ENCODE measurements at regions of chr1 and their contacts with region 1.

Region 1: GRCh38 chr1:66446261-66447001 is 87.5 kb upstream of the SGIP1 start:
- DNase-seq: peak in 7 of 9 donors; percentile 45 to 82 (median 74)
- ATAC-seq: peak; percentile 85
- H3K4me3 ChIP-seq: no peak overlapping the region
- H3K4me3 Mint-ChIP-seq: peak overlapping the region in 9 of 10 donors; percentile 59 to 85 (median 74)
- H3K27ac ChIP-seq: peak overlapping the region; percentile 72
- H3K27ac Mint-ChIP-seq: peak overlapping the region; percentile 87 to 98 (median 94)
- H3K4me1 ChIP-seq: peaks cover 12 to 18% of the 10 kb centered on the region in 2 donors
- H3K4me1 Mint-ChIP-seq: peaks cover 18 to 32% (median 25%) of the 10 kb centered on the region in 7 donors
- H3K27me3 ChIP-seq: no peaks in the 10 kb centered on the region
- H3K27me3 Mint-ChIP-seq: peaks cover 0 to 20% (median 0%) of the 10 kb centered on the region in 5 donors

Region 2: DNA sequence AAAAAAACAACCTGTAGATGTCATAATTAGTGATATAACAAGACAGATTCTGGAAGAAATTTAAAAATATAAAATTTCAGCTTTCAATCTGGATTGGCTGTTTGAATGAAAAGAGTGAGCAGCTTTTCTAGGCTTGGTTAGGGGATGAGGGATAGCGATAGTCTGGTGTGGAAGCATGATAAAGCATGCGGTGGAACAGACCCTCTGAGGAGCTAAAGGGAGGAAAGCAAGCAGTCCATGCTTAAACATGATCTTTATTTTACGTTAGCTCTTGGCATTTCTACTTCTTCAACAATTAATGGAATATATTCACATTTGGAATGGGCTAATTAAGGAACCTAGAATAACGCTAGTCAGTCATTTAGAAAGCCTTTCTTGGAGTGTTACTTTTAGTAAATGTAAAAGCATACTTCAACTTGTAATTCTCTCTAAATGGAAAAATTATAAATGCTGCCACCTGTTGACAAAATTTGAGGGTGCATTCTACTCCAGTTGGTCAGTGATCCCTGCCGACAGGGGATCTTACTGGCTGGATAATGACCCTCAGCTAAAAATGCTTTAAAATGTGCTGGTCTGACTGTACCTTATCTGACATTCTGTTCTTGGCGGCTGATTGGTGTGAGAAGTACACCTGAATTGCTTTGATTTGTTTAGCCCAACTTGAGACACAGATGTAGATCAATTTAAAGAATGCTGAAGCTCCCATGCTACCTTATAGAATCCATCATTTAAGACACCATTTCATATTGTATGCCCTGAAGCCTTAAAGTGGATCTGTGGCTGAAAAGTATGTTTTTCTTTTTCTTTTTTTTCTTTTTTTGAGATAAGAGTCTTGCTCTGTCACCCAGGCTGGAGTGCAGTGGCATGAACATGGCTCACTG is 1237.2 kb before region 1 on chr1:
- CTCF ChIA-PET with region 1: no interaction called
- POLR2A ChIA-PET with region 1: no interaction called
- intact Hi-C with region 1: loop called in 1 of 2 experiments (anchors 10 kb)
- DNase-seq: peak in 3 of 9 donors; percentile 4 to 15 (median 10)
- ATAC-seq: no peak
- H3K4me3 ChIP-seq: no peak overlapping the region
- H3K4me3 Mint-ChIP-seq: no peak overlapping the region
- H3K27ac ChIP-seq: no peak overlapping the region
- H3K27ac Mint-ChIP-seq: no peak overlapping the region
- H3K4me1 ChIP-seq: no peaks in the 10 kb centered on the region
- H3K4me1 Mint-ChIP-seq: peaks cover 0 to 59% (median 0%) of the 10 kb centered on the region in 7 donors
- H3K27me3 ChIP-seq: no peaks in the 10 kb centered on the region
- H3K27me3 Mint-ChIP-seq: peaks cover 0 to 12% (median 0%) of the 10 kb centered on the region in 5 donors

Region 3: GRCh38 chr1:65687428-65688214 is 758.8 kb before region 1 on chr1:
- CTCF ChIA-PET with region 1: no interaction called
- POLR2A ChIA-PET with region 1: no interaction called
- intact Hi-C with region 1: loop called in 1 of 2 experiments (anchors 5 kb)
- DNase-seq: peak; percentile 47 to 81 (median 71)
- ATAC-seq: peak; percentile 92
- H3K4me3 ChIP-seq: no peak overlapping the region
- H3K4me3 Mint-ChIP-seq: peak overlapping the region in 1 of 10 donors; percentile 17
- H3K27ac ChIP-seq: no peak overlapping the region
- H3K27ac Mint-ChIP-seq: peak overlapping the region in 1 of 9 donors; percentile 51
- H3K4me1 ChIP-seq: peaks cover 0 to 5% of the 10 kb centered on the region in 2 donors
- H3K4me1 Mint-ChIP-seq: peaks cover 0 to 14% (median 0%) of the 10 kb centered on the region in 7 donors
- H3K27me3 ChIP-seq: no peaks in the 10 kb centered on the region
- H3K27me3 Mint-ChIP-seq: peaks cover 11 to 29% (median 16%) of the 10 kb centered on the region in 5 donors

Region 4: GRCh38 chr1:66242646-66243547 is 203.5 kb before region 1 on chr1:
- CTCF ChIA-PET with region 1: interaction called, 274 read pairs
- POLR2A ChIA-PET with region 1: interaction called, 4 read pairs
- intact Hi-C with region 1: loop called (anchors 1 kb)
- DNase-seq: peak; percentile 43 to 75 (median 65)
- ATAC-seq: peak; percentile 93
- H3K4me3 ChIP-seq: no peak overlapping the region
- H3K4me3 Mint-ChIP-seq: no peak overlapping the region
- H3K27ac ChIP-seq: no peak overlapping the region
- H3K27ac Mint-ChIP-seq: no peak overlapping the region
- H3K4me1 ChIP-seq: peaks cover 17 to 36% of the 10 kb centered on the region in 2 donors
- H3K4me1 Mint-ChIP-seq: peaks cover 7 to 31% (median 15%) of the 10 kb centered on the region in 7 donors
- H3K27me3 ChIP-seq: no peaks in the 10 kb centered on the region
- H3K27me3 Mint-ChIP-seq: peaks cover 6 to 7% (median 6%) of the 10 kb centered on the region in 5 donors

Region 5: DNA sequence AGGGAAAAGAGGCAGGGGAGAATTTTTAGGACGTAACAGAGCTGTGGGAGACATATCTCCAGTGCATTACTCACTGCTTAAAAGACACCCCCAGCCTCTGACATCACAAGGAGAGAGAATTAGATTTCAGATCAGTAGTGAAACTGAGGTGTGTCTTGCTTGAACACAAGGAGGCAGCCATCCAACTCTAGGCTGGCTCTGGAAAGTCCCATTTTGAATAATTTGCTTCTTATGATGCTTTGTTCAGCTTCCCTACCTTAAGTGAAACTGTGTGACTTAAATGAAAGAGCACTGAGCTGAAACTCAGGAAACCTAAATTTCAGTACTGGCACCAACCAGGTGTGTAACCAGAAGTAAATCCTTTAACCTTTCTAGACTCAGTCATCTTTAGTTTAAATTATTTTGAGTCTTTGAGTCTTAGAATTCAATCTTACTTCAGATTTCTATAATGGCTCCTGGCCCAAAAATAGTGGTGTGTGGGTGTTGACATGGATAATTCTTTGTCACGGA is 164.0 kb before region 1 on chr1:
- CTCF ChIA-PET with region 1: interaction called, 53 read pairs
- POLR2A ChIA-PET with region 1: interaction called, 12 read pairs
- intact Hi-C with region 1: loop called (anchors 1 kb)
- DNase-seq: peak in 8 of 9 donors; percentile 49 to 88 (median 68)
- ATAC-seq: peak; percentile 95
- H3K4me3 ChIP-seq: no peak overlapping the region
- H3K4me3 Mint-ChIP-seq: peak overlapping the region in 4 of 10 donors; percentile 12 to 57 (median 25)
- H3K27ac ChIP-seq: peak overlapping the region; percentile 64
- H3K27ac Mint-ChIP-seq: peak overlapping the region; percentile 70 to 93 (median 85)
- H3K4me1 ChIP-seq: peaks cover 49 to 59% of the 10 kb centered on the region in 2 donors
- H3K4me1 Mint-ChIP-seq: peaks cover 57 to 98% (median 89%) of the 10 kb centered on the region in 7 donors
- H3K27me3 ChIP-seq: no peaks in the 10 kb centered on the region
- H3K27me3 Mint-ChIP-seq: no peaks in the 10 kb centered on the region

Region 6: GRCh38 chr1:66725885-66726665 is 279.6 kb after region 1 on chr1:
- CTCF ChIA-PET with region 1: interaction called, 3 read pairs
- POLR2A ChIA-PET with region 1: no interaction called
- intact Hi-C with region 1: loop called in 1 of 2 experiments (anchors 1 kb)
- DNase-seq: peak; percentile 10 to 75 (median 61)
- ATAC-seq: peak; percentile 87
- H3K4me3 ChIP-seq: no peak overlapping the region
- H3K4me3 Mint-ChIP-seq: no peak overlapping the region
- H3K27ac ChIP-seq: no peak overlapping the region
- H3K27ac Mint-ChIP-seq: peak overlapping the region in 1 of 9 donors; percentile 14
- H3K4me1 ChIP-seq: peaks cover 0 to 3% of the 10 kb centered on the region in 2 donors
- H3K4me1 Mint-ChIP-seq: peaks cover 8 to 23% (median 16%) of the 10 kb centered on the region in 7 donors
- H3K27me3 ChIP-seq: peaks cover 0 to 2% of the 10 kb centered on the region in 2 donors
- H3K27me3 Mint-ChIP-seq: peaks cover 9 to 28% (median 13%) of the 10 kb centered on the region in 5 donors

Region 7: GRCh38 chr1:67019600-67020136 is 573.2 kb after region 1 on chr1:
- CTCF ChIA-PET with region 1: no interaction called
- POLR2A ChIA-PET with region 1: no interaction called
- intact Hi-C with region 1: no loop called
- DNase-seq: no peak
- ATAC-seq: no peak
- H3K4me3 ChIP-seq: no peak overlapping the region
- H3K4me3 Mint-ChIP-seq: no peak overlapping the region
- H3K27ac ChIP-seq: no peak overlapping the region
- H3K27ac Mint-ChIP-seq: peak overlapping the region in 2 of 9 donors; percentile 36 to 38
- H3K4me1 ChIP-seq: no peaks in the 10 kb centered on the region
- H3K4me1 Mint-ChIP-seq: peaks cover 0 to 13% (median 5%) of the 10 kb centered on the region in 7 donors
- H3K27me3 ChIP-seq: no peaks in the 10 kb centered on the region
- H3K27me3 Mint-ChIP-seq: no peaks in the 10 kb centered on the region

Measured in naive thymus-derived CD4-positive, alpha-beta T cell (primary cell).